Heart left ventricle (tissue), 16 donors: ENCODE measurements at regions of chr9 and their contacts with region 1.

Region 1: DNA sequence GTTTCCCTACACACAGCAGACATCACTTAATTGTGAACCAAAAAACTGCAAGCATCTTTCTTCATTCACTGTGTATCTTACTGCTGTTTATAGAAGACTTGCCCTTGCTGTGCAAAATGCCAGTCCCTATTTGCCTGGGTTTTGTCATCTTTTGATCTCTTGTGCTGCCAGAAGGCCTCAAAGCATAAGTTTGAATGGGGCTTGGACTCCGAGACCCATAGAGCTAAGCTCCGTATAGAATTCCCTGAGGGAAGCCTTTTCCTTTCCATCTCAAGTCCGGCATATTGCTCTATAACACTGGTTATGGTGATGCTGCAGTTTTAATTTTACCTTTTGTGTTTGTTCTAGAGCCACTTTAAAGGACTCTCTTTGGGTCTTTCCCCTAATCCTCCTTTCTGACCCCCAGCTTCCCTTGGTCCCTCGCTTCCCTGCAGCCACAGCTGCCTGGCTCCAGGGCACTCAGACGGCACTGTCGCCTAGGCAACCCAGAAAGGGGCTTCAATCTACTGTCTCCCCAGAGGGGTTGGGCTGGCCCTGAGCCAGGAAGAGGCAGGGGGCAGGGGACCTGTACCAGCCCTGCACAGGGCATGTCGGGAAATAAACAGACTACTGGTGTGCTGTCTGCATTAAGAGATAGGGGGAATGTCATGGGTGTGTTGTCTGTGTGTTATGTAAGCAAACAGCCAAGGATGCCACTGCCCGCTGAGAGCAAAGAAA is 73.4 kb upstream of the MELK start:
- DNase-seq: no peak
- ATAC-seq: no peak
- H3K4me3 ChIP-seq: no peak overlapping the region
- H3K27ac ChIP-seq: no peak overlapping the region
- H3K4me1 ChIP-seq: peaks cover 0 to 5% (median 0%) of the 10 kb centered on the region in 12 donors
- H3K27me3 ChIP-seq: no peaks in the 10 kb centered on the region
- CTCF ChIP-seq: no peak
- POLR2A ChIP-seq: no peak

Region 2: GRCh38 chr9:36441966-36442365 is 57.4 kb before region 1 on chr9:
- intact Hi-C with region 1: loop called in 1 of 10 experiments (anchors 10 kb)
- DNase-seq: no peak
- ATAC-seq: no peak
- H3K4me3 ChIP-seq: no peak overlapping the region
- H3K27ac ChIP-seq: no peak overlapping the region
- H3K4me1 ChIP-seq: peaks cover 0 to 42% (median 21%) of the 10 kb centered on the region in 12 donors
- H3K27me3 ChIP-seq: no peaks in the 10 kb centered on the region
- CTCF ChIP-seq: no peak
- POLR2A ChIP-seq: no peak

Region 3: GRCh38 chr9:36551129-36551528 is 51.8 kb after region 1 on chr9:
- intact Hi-C with region 1: loop called in 1 of 10 experiments (anchors 10 kb)
- DNase-seq: no peak
- ATAC-seq: no peak
- H3K4me3 ChIP-seq: no peak overlapping the region
- H3K27ac ChIP-seq: no peak overlapping the region
- H3K4me1 ChIP-seq: no peaks in the 10 kb centered on the region
- H3K27me3 ChIP-seq: peaks cover 0 to 5% (median 0%) of the 10 kb centered on the region in 9 donors
- CTCF ChIP-seq: no peak
- POLR2A ChIP-seq: no peak